Activated naive CD4-positive, alpha-beta T cell treated with anti-CD3 and anti-CD28 coated beads for 36 hours (primary cell): ENCODE measurements at regions of chr7 and their contacts with region 1.

Region 1: DNA sequence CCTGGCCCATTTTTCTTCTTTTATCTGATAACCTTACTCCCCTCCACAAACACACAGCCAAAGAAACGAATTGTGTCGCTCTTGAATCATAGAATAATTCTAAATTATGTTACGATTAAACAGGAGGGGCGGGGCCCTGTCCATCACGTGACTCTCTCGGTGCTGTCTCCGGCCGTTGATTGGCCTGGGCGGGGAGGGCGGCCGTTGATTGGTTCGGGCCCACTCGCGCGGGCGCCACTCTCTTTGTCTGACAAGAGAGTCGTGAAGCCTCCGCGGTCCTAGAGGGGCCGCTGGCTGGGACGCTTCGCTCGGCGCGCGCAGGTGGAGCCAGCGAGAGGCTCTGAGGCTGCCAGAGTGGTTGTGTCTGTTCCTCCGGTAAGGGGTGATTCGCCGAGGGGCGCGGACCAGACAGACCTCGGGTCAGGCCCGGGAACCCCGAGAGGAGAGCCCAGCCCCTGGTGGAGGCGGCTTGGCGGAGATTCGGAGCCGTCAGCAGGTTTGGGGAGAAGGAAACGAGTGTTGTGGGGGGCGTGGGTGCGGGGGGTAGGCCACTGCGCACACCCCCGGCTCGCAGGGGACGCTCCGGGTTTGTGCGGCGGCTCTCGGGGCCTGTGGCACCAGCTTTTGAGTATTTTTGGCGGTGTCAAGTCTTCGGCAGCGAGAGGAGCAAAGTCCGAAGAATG is at the start of gene ZNF789:
- DNase-seq: peak; percentile 99
- H3K4me3 Mint-ChIP-seq: peak within 1 kb of the TSS; percentile 95
- H3K27ac Mint-ChIP-seq: peak within 1 kb of the TSS; percentile 83
- H3K4me1 Mint-ChIP-seq: peaks cover 32% of the 10 kb centered on the region
- H3K27me3 Mint-ChIP-seq: no peaks in the 10 kb centered on the region
- total RNA-seq, gene ZNF789: 8.0 to 9.8 TPM

Region 2: GRCh38 chr7:99438573-99439480 is 33.9 kb before region 1 on chr7 and contains the starts of genes CPSF4 and PTCD1:
- CTCF ChIA-PET with region 1: no interaction called
- intact Hi-C with region 1: loop called (anchors 2 kb)
- DNase-seq: peak; percentile 95
- H3K4me3 Mint-ChIP-seq: peak within 1 kb of the TSS; percentile 98
- H3K27ac Mint-ChIP-seq: peak within 1 kb of the TSS; percentile 94
- H3K4me1 Mint-ChIP-seq: peaks cover 43% of the 10 kb centered on the region
- H3K27me3 Mint-ChIP-seq: no peaks in the 10 kb centered on the region
- total RNA-seq, gene CPSF4: 70.6 to 73.5 TPM
- total RNA-seq, gene PTCD1: 3.5 to 5.1 TPM

Region 3: DNA sequence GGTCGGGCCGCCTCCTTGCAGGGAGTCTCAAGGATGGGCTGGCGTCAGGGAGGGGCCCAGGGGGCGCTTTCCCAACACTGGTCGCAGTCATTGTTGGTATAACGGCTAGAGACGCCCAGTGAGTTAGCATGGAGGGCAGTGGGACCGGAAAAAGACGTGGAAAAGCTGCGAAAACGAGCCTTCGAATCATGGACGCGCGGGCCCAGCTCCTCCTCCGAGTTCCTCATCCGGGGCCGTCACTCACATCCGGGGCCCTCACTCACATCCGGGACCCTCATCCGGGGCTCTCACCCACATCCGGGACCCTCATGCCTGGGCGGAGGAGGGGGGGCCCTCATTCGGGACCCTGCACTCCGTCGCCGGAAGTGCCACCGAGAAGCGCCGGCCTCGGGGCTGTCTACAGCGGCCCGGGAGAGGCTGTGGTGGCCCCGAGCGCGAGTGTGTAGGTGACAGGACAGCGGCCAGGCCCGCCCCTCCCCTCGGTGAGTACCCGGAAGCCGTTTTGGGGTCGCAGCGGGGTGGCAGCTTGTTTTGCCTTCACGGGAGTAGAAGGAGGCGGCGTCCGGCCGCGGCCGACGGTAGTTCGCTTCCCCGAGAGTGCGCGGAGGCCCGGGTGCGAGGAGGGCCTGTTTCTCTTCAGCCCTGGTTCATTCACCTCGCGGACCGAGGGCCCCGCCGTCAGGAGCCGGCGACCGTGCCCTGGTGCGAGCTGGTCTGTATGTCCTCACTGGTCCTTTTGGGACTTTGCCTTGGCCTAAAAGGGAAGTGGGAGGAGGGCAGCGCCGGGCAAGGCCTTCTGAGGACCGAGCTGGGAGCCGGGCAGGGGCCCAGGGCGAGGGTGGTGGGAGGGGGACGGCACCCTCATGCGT is 85.8 kb after region 1 on chr7 and contains the start of gene ZNF655:
- CTCF ChIA-PET with region 1: no interaction called
- intact Hi-C with region 1: loop called (anchors 2 kb)
- DNase-seq: peak; percentile 89
- H3K4me3 Mint-ChIP-seq: peak within 1 kb of the TSS; percentile 91
- H3K27ac Mint-ChIP-seq: peak within 1 kb of the TSS; percentile 96
- H3K4me1 Mint-ChIP-seq: peaks cover 53% of the 10 kb centered on the region
- H3K27me3 Mint-ChIP-seq: no peaks in the 10 kb centered on the region
- total RNA-seq, gene ZNF655: 35.8 to 39.6 TPM

Region 4: DNA sequence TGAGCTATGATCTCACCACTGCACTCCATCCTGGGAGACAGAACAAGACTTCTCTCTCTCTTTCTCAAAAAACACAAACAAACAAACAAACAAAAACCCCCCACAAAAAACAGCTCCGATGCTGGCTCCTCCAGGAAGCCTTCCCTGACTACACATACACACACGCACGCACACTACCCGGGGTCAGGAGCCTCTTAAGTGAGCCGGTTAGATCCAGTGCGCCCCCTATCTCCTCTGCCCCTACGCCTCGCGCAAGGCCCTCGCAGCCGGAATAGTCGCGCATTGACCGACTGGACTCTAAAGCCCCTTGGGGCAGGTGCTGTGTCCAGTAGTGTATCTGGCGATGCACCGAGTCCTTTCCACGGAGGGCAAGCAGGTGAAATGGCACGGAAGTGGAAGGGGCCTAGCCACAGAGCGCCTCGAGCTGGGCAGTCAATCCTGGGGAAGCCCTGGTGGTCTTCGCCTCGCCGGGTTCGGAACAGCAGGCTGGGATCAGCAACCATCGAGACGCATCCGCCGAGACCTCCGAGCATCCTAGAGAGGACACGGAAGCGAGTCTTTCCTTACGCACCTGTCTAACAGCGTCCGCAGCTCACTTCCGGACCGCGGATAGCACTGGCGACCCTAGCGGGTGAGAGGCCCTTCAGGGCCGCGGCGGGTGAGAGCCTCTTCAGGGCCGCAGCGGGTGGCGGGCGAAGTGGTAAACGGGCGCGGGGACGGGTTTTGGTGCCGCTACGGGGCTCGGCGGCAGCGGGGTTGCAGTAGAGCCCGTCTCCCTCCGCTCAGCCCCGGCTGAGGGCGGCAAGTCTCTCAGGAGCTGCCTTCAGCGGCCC is 143.9 kb after region 1 on chr7 and contains the start of gene ZSCAN25:
- CTCF ChIA-PET with region 1: no interaction called
- intact Hi-C with region 1: loop called (anchors 2 kb)
- DNase-seq: peak; percentile 91
- H3K4me3 Mint-ChIP-seq: peak within 1 kb of the TSS; percentile 95
- H3K27ac Mint-ChIP-seq: peak within 1 kb of the TSS; percentile 92
- H3K4me1 Mint-ChIP-seq: peaks cover 35% of the 10 kb centered on the region
- H3K27me3 Mint-ChIP-seq: no peaks in the 10 kb centered on the region
- total RNA-seq, gene ZSCAN25: 20.7 to 22.3 TPM

Region 5: DNA sequence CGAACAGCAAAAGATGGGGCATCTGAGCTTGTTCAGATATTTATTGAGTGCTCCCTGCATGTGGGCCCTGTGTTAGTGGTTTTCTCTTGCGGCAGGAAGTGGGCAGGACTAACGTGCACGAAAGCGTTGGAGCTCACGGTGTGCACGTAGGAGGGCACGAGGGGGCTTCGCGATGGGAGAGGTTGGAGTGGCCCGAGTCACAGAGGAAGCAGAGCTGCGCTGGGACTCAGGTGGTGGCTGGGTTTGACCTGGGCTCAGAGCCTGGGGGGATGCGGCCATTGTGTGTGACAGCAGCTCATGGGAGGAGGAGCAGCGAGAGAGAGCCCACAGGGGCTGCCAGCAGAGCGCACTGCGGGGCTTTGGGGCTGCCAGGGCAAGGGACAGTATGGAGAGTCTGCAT is 151.8 kb after region 1 on chr7:
- CTCF ChIA-PET with region 1: no interaction called
- intact Hi-C with region 1: loop called (anchors 1 kb)
- DNase-seq: peak; percentile 87
- H3K4me3 Mint-ChIP-seq: peak overlapping the region; percentile 91
- H3K27ac Mint-ChIP-seq: peak overlapping the region; percentile 96
- H3K4me1 Mint-ChIP-seq: peaks cover 59% of the 10 kb centered on the region
- H3K27me3 Mint-ChIP-seq: no peaks in the 10 kb centered on the region